Heart left ventricle (tissue), 16 donors: ENCODE measurements at regions of chr16 and their contacts with region 1.

Region 1: DNA sequence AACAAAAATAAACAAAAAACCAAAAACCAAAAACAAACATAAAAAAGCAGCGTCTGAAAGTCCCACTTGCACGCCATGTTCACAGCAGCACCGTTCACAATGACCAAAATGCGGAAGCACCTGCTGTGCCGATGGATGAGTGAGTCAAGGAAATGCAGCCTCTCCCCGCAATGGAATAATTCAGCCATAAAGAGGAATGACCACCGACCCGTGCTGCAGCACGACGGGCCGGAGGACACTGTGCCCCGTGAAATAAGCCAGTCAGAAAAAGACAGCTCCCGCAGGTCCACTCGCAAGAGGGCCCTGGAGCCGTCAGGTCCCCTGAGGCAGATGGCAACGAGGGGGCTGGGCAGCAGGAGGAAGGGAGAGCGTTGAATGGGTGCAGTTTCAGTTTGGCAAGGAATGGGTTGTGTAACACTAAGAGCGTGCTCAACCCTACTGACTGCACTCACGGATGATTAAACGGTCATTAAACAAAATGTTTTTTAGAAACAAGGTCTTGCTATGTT is 5.1 kb downstream of the CLCN7 start:
- DNase-seq: peak in 1 of 5 donors; percentile 48
- ATAC-seq: peak in 1 of 4 donors; percentile 23
- H3K4me3 ChIP-seq: peak overlapping the region in 1 of 12 donors; percentile 28
- H3K27ac ChIP-seq: peak overlapping the region in 1 of 12 donors; percentile 90
- H3K4me1 ChIP-seq: peaks cover 0 to 46% (median 12%) of the 10 kb centered on the region in 12 donors
- H3K27me3 ChIP-seq: no peaks in the 10 kb centered on the region
- CTCF ChIP-seq: no peak
- POLR2A ChIP-seq: no peak

Region 2: GRCh38 chr16:1543085-1543896 is 73.5 kb after region 1 on chr16:
- intact Hi-C with region 1: loop called in 1 of 10 experiments (anchors 2 kb)
- DNase-seq: peak; percentile 83 to 91 (median 85)
- ATAC-seq: peak; percentile 26 to 75 (median 70)
- H3K4me3 ChIP-seq: peak overlapping the region in 4 of 12 donors; percentile 1 to 23 (median 12)
- H3K27ac ChIP-seq: peak overlapping the region; percentile 85 to 98 (median 95)
- H3K4me1 ChIP-seq: peaks cover 40 to 100% (median 95%) of the 10 kb centered on the region in 12 donors
- H3K27me3 ChIP-seq: no peaks in the 10 kb centered on the region
- CTCF ChIP-seq: peak in 1 of 12 donors; percentile 18
- POLR2A ChIP-seq: peak in 1 of 2 donors; percentile 28